Heart right ventricle (tissue), 16 donors: ENCODE measurements at regions of chr18 and their contacts with region 1.

Region 1: GRCh38 chr18:2857491-2858131 is 10.8 kb downstream of the EMILIN2 start:
- DNase-seq: peak; percentile 71 to 78
- ATAC-seq: peak; percentile 82 to 97 (median 90)
- H3K4me3 ChIP-seq: peak overlapping the region in 3 of 10 donors; percentile 1 to 9 (median 2)
- H3K27ac ChIP-seq: peak overlapping the region in 9 of 10 donors; percentile 40 to 86 (median 76)
- H3K4me1 ChIP-seq: peaks cover 3 to 48% (median 21%) of the 10 kb centered on the region in 9 donors
- H3K27me3 ChIP-seq: peaks cover 0 to 3% (median 0%) of the 10 kb centered on the region in 7 donors
- CTCF ChIP-seq: no peak

Region 2: GRCh38 chr18:2655178-2655953 is 202.2 kb before region 1 on chr18 and contains the start of gene SMCHD1:
- intact Hi-C with region 1: no loop called
- DNase-seq: peak; percentile 86 to 90
- ATAC-seq: peak; percentile 89 to 94 (median 91)
- H3K4me3 ChIP-seq: peak within 1 kb of the TSS; percentile 65 to 94 (median 88)
- H3K27ac ChIP-seq: peak within 1 kb of the TSS; percentile 86 to 99 (median 96)
- H3K4me1 ChIP-seq: peaks cover 0 to 48% (median 36%) of the 10 kb centered on the region in 9 donors
- H3K27me3 ChIP-seq: no peaks in the 10 kb centered on the region
- CTCF ChIP-seq: no peak
- total RNA-seq, gene SMCHD1: 20.4 to 35.3 (median 33.4) TPM

Region 3: GRCh38 chr18:2889761-2890192 is 32.2 kb after region 1 on chr18:
- intact Hi-C with region 1: loop called in 2 of 10 experiments (anchors 2 to 5 kb)
- DNase-seq: no peak
- ATAC-seq: no peak
- H3K4me3 ChIP-seq: no peak overlapping the region
- H3K27ac ChIP-seq: no peak overlapping the region
- H3K4me1 ChIP-seq: peaks cover 0 to 21% (median 11%) of the 10 kb centered on the region in 9 donors
- H3K27me3 ChIP-seq: no peaks in the 10 kb centered on the region
- CTCF ChIP-seq: no peak